GM13977 (cell line): ENCODE measurements at regions of chr15 and their contacts with region 1.

Region 1: DNA sequence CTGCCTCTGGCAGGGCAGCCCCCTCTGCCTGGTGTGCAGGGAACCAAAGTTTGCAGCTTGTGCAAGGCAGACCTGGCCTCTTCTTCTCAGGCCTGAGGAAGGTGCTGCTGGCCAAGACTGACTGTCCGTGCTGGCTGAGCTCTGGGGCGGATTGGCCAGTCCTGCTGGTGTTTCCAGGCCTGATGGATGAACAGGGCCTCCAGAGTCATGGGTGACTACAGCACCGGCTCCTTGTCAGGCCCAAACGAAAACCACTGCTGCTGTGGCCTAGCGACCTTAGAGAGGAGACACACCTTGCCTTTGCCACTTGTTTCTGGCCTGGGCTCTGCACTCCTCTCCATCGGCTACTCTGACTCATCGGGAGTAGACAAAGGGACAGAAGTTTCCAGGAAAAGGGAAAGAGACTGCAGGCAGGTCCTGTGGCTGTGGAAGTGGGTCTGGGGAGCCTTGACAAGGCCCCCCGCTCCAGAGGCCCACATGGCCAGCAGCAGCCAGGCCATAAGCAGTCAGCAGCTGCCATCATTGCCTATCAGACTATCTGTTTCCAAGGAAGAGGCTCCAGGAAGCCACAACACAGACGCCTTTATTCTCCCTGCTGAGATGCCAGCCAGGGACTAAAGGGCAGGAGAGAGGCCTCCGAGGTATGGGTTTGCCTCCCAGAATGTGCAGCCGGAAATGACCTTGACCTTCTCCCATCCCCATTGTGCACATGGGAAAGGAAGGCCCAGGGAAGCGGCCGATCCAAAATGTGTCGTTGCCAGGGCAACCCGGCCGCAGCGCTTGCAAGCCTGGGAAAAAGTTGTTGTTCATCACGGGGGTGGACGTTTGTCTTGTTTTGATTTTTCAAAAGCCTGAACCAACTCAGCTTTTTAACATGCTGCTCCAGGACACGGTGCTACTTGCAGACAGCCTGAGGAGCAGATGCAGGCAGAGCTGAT is 160.5 kb downstream of the CHSY1 start:
- DNase-seq: no peak
- CTCF ChIP-seq: no peak

Region 2: GRCh38 chr15:101251830-101252820 is 160.8 kb after region 1 on chr15 and contains the start of gene CHSY1:
- in situ Hi-C with region 1: loop called (anchors 10 kb)
- DNase-seq: peak; percentile 94
- CTCF ChIP-seq: peak; percentile 57